Left ventricle myocardium superior (tissue), 1 donor: ENCODE measurements at regions of chr5 and their contacts with region 1.

Region 1: DNA sequence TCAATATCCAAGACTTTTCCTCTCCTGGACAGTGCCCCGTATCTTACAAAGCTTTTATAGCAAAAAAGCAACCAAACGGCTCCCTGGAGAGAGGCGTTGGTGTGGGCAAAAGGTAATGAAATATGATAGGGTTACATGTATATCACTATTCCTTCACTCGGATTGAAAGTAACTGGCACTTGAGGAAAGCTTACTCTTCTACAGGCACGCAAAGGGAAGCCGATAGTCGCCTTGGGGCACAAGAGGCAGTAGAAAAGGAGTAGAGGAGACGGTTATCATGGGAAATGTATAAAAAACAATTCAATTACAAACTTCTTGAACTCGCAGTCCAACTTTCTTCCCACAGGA is 1.1 kb downstream of the DIAPH1 start:
- DNase-seq: no peak
- ATAC-seq: no peak

Region 2: GRCh38 chr5:141598391-141599350 is 19.0 kb before region 1 on chr5:
- intact Hi-C with region 1: loop called (anchors 2 kb)
- DNase-seq: no peak
- ATAC-seq: peak; percentile 92